Tibial artery (tissue), 4 donors: ENCODE measurements at regions of chrX and their contacts with region 1.

Region 1: GRCh38 chrX:39814391-39814790 is 283.4 kb downstream of the BCOR start:
- DNase-seq: no peak
- H3K4me3 ChIP-seq: no peak overlapping the region
- H3K27ac ChIP-seq: peak overlapping the region; percentile 50 to 62
- H3K4me1 ChIP-seq: peaks cover 0 to 49% (median 21%) of the 10 kb centered on the region in 4 donors
- H3K27me3 ChIP-seq: no peaks in the 10 kb centered on the region
- CTCF ChIP-seq: peak; percentile 27 to 34

Region 2: DNA sequence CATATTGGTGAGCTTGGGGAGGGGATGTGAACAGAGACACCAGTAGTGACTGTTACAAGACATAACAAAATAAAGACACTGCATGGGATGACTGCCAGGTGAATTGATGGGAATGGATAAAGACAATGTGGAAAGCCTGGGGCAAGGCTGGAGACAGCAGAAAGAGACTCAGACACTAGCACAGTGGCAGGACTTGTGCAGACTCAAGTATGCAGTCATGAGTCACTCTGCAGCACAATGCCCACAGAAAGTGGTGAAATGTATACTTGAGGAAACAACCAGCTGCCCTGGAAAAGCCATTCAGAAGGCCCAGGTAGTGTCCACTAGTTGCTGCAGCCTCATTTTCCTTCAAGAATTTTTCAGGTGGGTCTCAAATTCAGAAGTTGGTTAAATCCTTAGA is 560.8 kb before region 1 on chrX:
- intact Hi-C with region 1: no loop called
- DNase-seq: no peak
- H3K4me3 ChIP-seq: no peak overlapping the region
- H3K27ac ChIP-seq: no peak overlapping the region
- H3K4me1 ChIP-seq: no peaks in the 10 kb centered on the region
- H3K27me3 ChIP-seq: no peaks in the 10 kb centered on the region
- CTCF ChIP-seq: no peak

Region 3: GRCh38 chrX:40097497-40098263 is 283.3 kb after region 1 on chrX and contains the start of gene BCOR:
- intact Hi-C with region 1: loop called (anchors 10 kb)
- DNase-seq: peak in 1 of 2 donors; percentile 88
- H3K4me3 ChIP-seq: peak within 1 kb of the TSS; percentile 86 to 95
- H3K27ac ChIP-seq: peak within 1 kb of the TSS; percentile 93 to 97
- H3K4me1 ChIP-seq: peaks cover 0 to 61% (median 14%) of the 10 kb centered on the region in 4 donors
- H3K27me3 ChIP-seq: no peaks in the 10 kb centered on the region
- CTCF ChIP-seq: peak in 1 of 2 experiments; percentile 5

Region 4: DNA sequence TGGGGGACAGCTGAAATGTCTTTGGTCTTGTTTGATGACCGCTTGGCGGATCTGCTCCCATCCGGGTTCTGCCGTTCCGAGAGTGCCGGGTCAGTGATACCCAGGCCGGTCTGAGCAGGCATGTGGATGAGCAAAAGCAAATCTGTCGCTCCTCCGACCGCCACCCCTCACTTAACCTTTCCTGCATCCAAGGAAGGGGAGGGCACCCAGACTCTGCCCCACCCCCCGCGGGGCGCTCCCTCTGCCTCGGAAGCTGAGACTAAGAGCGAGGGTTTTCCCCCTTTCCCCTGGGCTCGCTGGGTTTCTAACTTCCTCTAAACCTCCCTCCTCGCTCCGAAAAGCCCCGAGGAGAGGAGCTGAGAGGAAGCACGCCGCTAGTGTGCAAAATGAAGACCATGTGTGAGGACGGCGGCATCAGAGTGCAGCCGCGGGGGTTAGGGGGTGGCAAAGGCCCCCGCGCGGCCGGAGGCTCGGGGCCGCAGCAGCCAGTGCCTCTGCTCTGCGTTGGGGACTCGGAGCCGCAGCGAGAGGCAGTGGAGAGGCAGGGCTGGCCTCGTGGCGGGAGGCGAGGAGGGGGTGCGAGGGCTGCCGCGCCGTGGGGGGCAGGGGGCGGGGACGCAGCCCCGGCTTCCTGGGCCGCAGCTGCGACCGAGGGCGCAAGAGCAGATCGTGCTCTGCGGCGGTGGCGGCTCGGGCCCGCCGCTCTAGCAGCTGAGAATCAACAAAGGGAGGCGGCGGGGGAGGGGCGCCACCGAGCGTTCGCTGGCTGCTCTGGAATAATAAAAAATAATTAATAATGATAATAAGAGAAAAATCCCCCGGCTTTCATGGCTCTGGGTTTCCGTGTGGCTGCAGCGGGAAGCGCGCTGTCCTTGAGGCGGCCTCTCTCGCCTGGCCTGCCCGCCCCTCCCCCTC is 339.2 kb after region 1 on chrX:
- intact Hi-C with region 1: loop called (anchors 5 kb)
- DNase-seq: peak in 1 of 2 donors; percentile 73
- H3K4me3 ChIP-seq: peak overlapping the region; percentile 53 to 59
- H3K27ac ChIP-seq: peak overlapping the region; percentile 67 to 73
- H3K4me1 ChIP-seq: peaks cover 0 to 43% (median 18%) of the 10 kb centered on the region in 4 donors
- H3K27me3 ChIP-seq: no peaks in the 10 kb centered on the region
- CTCF ChIP-seq: no peak

Region 5: GRCh38 chrX:40622479-40623138 is 808.2 kb after region 1 on chrX:
- intact Hi-C with region 1: no loop called
- DNase-seq: no peak
- H3K4me3 ChIP-seq: no peak overlapping the region
- H3K27ac ChIP-seq: no peak overlapping the region
- H3K4me1 ChIP-seq: no peaks in the 10 kb centered on the region
- H3K27me3 ChIP-seq: no peaks in the 10 kb centered on the region
- CTCF ChIP-seq: no peak